ENCODE measurements at regions of chr3 and their contacts with region 1.

Region 1: GRCh38 chr3:99172736-99173657 is 271.5 kb upstream of the DCBLD2 start:
- DNase-seq: peak; percentile 48 to 66
- H3K4me3 ChIP-seq: no peak overlapping the region
- H3K27ac ChIP-seq: no peak overlapping the region
- H3K4me1 ChIP-seq: no peaks in the 10 kb centered on the region
- H3K27me3 ChIP-seq: no peaks in the 10 kb centered on the region
- CTCF ChIP-seq: peak in 5 of 6 experiments; percentile 12 to 71 (median 60)
- POLR2A ChIP-seq: no peak

Region 2: GRCh38 chr3:99023590-99024192 is 149.3 kb before region 1 on chr3:
- intact Hi-C with region 1: loop called (anchors 5 kb)
- DNase-seq: no peak
- H3K4me3 ChIP-seq: no peak overlapping the region
- H3K27ac ChIP-seq: no peak overlapping the region
- H3K4me1 ChIP-seq: peaks cover 0 to 8% of the 10 kb centered on the region in 2 donors
- H3K27me3 ChIP-seq: no peaks in the 10 kb centered on the region
- CTCF ChIP-seq: peak; percentile 49 to 77 (median 59)
- POLR2A ChIP-seq: no peak

Region 3: DNA sequence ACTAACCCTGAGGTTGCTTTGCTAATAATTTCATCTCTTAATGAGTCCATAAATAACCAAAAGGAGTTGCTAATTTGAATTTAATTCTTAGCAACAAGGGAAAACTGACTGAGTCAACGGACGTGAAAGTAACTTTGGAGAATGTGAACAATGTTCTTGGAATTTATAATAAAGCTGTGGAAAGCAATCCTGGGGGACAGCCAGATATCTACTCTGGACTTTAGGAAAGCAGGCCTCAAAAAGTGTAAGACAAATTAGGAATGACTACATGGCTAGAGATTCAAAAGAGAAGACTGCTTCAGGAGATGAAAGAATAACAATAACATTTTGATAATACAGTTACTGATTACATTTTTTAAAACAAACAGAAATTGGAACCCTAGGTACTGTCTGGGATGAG is 147.0 kb after region 1 on chr3:
- intact Hi-C with region 1: no loop called
- DNase-seq: no peak
- H3K4me3 ChIP-seq: no peak overlapping the region
- H3K27ac ChIP-seq: no peak overlapping the region
- H3K4me1 ChIP-seq: no peaks in the 10 kb centered on the region
- H3K27me3 ChIP-seq: no peaks in the 10 kb centered on the region
- CTCF ChIP-seq: no peak
- POLR2A ChIP-seq: no peak

Measured in thyroid gland (tissue), 4 donors.